ENCODE measurements at regions of chr2 and their contacts with region 1.

Region 1: DNA sequence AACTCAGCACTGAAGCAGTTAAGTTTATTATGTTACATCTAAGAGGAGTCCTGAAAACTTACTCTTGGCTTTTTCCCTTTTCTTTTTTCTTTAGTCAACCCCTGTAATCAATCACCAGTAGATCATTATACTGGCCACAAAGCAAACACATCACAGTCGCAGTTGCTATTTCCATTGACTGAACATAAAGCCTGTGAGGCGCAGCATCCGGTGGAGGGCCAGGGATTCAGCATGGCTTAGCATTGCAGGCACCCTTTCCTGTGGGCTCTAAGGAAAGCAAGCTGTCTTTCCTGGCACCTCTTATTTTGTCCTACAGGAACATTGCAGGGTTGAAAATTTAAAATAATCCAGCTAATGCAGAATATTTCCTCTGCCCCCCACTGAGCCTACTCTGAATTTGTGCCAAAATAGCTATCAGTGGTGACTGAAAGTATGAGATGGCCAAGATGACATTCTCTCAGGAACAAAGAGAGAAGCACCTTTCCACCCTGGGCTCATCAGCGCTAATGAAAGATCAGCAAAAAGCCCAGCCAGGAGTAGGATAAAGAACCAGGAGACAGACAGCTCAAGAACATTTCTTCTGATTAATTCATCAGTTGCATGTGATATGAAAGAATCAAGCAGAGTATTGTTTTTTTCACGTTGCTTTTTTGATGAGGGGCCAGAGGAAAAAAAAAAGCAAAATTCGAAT is 85.3 kb upstream of the SULT1C3 start:
- DNase-seq: no peak
- H3K4me3 ChIP-seq: no peak overlapping the region
- H3K27ac ChIP-seq: no peak overlapping the region
- H3K4me1 ChIP-seq: no peaks in the 10 kb centered on the region
- H3K27me3 ChIP-seq: peaks cover 0 to 1% (median 0%) of the 10 kb centered on the region in 4 experiments; a peak in 1 of 7 replicates
- CTCF ChIP-seq: no peak
- EP300 ChIP-seq: no peak
- POLR2A ChIP-seq: no peak
- RAD21 ChIP-seq: no peak

Region 2: DNA sequence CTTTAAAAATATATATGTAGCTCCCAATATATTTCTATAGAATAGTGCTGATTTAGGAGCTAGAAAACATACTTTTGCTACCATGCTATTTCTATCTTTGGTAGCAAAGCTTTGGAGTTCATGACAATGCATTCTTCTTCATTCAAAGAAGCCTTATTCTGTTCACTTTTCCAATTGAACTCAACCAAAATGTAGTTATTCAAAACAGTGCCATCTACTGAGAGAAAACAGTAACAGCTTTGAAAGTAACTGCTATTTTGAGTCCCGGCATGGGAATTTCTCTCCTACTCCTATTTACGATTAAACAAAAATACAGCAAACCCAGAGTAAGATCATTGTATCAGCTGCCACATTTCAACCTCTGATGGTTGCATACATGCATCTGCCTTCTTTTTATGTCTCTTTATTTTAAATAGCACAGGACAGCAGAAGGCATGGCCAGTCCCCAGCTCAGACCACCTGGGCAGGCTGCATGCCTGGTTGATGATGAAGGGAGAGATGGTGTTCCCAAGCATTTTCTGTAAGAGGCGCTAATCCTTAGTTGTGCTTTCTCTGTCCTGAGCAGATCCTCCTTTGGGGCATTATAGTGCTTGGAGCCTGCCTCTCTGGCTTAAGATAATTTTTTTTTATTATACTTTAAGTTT is 15.6 kb after region 1 on chr2:
- CTCF ChIA-PET with region 1: interaction called, 28 read pairs
- POLR2A ChIA-PET with region 1: no interaction called
- DNase-seq: peak in 1 of 2 experiments; percentile 54
- H3K4me3 ChIP-seq: no peak overlapping the region
- H3K27ac ChIP-seq: no peak overlapping the region
- H3K4me1 ChIP-seq: no peaks in the 10 kb centered on the region
- H3K27me3 ChIP-seq: no peaks in the 10 kb centered on the region
- CTCF ChIP-seq: peak in 1 of 3 experiments; percentile 51; a peak in 2 of 4 replicates
- EP300 ChIP-seq: no peak
- POLR2A ChIP-seq: no peak
- RAD21 ChIP-seq: peak; percentile 37 to 45; a peak in 3 of 4 replicates